Lower leg skin (tissue), 4 donors: ENCODE measurements at regions of chr17 and their contacts with region 1.

Region 1: GRCh38 chr17:4789901-4790704 is 1.3 kb downstream of the GLTPD2 start:
- DNase-seq: peak; percentile 78 to 96
- H3K4me3 ChIP-seq: peak overlapping the region; percentile 43
- CTCF ChIP-seq: peak in 1 of 3 donors; percentile 23
- POLR2A ChIP-seq: peak in 1 of 2 donors; percentile 48

Region 2: DNA sequence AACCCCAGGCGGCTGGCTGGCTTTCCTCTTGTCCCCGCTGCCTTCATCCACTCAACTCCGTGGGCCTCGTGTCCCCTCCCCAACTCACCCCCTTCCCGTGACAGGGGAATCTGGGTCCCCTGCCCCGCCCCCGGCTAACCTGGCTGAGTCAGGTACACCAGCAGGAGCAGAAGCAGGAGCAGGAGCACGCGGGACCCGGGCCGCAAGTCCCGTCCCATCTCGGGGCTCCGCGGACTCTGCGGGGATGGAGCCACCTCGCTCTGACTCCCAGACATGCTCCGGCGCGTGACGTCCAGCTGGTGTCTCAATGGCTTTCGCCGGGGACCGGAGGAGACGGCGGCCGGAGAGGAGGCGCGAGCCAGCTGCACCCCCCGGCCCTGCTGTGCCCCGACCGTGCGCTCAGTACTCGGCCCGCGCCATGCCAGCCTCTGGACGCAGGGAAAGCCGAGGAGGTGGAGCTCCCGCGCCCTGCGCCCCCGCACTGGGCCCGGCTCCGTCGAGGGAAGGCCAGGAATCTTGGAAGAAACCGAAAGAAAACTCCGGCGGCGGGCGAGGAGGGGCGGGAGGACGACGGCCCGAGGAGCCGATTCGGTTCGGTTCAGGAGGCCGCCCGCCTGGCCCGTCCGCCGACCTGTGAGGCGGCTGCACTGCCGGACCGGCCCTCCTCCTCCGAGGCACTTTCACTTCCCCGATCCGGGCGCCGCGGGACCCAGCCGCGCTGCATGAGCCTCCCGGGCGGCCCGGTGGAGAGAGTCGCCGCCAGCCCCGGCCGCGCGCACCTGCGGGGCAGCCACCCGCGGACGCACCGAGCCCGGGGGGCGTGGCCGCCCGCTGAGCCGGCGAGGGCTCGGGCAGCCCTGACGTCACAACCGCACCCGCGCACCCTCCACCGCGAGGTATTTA is 50.7 kb before region 1 on chr17 and contains the starts of genes CXCL16 and ZMYND15:
- intact Hi-C with region 1: loop called (anchors 5 kb)
- DNase-seq: peak in 1 of 2 donors; percentile 92
- H3K4me3 ChIP-seq: peak within 1 kb of the TSS; percentile 75
- CTCF ChIP-seq: no peak
- POLR2A ChIP-seq: no peak
- total RNA-seq, gene CXCL16: 25.0 to 28.1 (median 25.5) TPM
- total RNA-seq, gene ZMYND15: 0.46 to 1.7 (median 1.2) TPM in 3 of 4 donors, not detected in the other